Sciatic nerve (tissue), 2 donors: ENCODE measurements at regions of chr1 and their contacts with region 1.

Region 1: DNA sequence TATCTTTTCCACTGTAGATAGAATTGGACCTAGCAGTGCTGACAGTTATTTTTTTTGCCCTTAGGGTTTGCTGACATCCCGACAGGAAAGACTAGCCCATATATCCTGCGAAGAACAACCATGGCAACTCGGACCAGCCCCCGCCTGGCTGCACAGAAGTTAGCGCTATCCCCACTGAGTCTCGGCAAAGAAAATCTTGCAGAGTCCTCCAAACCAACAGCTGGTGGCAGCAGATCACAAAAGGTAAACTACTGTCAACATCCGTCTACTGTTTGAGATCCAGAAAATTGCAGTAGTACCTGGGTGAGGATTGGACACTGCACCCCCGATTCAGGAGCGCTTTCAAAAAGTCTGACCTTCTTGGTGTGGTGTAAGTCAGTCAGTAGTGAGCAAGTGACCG is 55.8 kb downstream of the CENPF start:
- DNase-seq: no peak
- ATAC-seq: peak; percentile 27

Region 2: DNA sequence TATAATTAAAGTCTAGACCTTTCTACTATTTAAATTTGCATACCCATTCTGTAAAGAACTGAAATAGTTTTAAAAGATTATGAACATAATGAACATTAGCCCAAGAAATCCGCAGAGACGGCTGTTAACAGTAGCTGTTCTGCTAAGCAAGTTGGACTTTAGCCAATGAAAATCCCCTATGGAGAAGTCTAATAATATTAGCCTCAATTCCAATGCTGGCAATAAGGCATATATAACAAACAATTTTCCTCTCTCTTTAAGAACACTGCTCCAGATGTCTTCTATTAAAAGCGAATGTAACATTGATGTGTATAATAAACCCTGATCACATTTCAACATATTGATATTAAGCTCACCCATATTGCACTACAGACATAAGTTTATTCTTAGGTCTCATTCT is 687.0 kb after region 1 on chr1:
- intact Hi-C with region 1: no loop called
- DNase-seq: no peak
- ATAC-seq: no peak

Region 3: GRCh38 chr1:215526553-215527151 is 867.9 kb after region 1 on chr1:
- intact Hi-C with region 1: loop called (anchors 10 kb)
- DNase-seq: no peak
- ATAC-seq: peak; percentile 45